ENCODE measurements at regions of chr17 and their contacts with region 1.

Region 1: GRCh38 chr17:43940630-43941029 is 1.6 kb downstream of the PPY start:
- DNase-seq: peak; percentile 81
- H3K4me3 ChIP-seq: no peak overlapping the region
- H3K27ac ChIP-seq: no peak overlapping the region
- H3K4me1 ChIP-seq: peaks cover 0 to 7% of the 10 kb centered on the region in 2 experiments; a peak in 1 of 4 replicates
- H3K27me3 ChIP-seq: no peaks in the 10 kb centered on the region
- CTCF ChIP-seq: peak; percentile 58
- EP300 ChIP-seq: no peak
- RAD21 ChIP-seq: peak; percentile 75

Region 2: DNA sequence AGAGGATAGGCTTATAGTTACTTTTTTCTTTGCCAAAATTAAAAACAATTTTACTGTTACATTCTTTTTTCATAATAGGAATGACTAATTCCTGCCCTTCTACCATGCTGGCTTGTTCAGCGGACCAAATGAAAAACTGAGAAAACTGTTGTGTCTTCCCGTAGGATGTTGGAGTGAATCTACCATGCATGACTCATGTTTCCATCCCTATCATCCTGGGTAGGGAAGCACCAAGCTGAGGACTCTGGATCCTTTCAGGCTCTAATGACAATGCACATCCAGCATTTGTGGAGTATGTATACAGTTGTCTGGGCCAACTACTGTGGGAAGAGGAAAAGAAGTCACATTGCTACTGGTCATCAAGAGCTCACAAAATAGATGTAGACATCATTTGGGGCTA is 497.9 kb before region 1 on chr17:
- CTCF ChIA-PET with region 1: no interaction called
- POLR2A ChIA-PET with region 1: no interaction called
- DNase-seq: no peak
- H3K4me3 ChIP-seq: no peak overlapping the region
- H3K27ac ChIP-seq: peak overlapping the region in 1 of 2 experiments; percentile 34; a peak in 1 of 4 replicates
- H3K4me1 ChIP-seq: no peaks in the 10 kb centered on the region
- H3K27me3 ChIP-seq: no peaks in the 10 kb centered on the region
- CTCF ChIP-seq: no peak
- EP300 ChIP-seq: no peak
- RAD21 ChIP-seq: no peak

Region 3: GRCh38 chr17:43832976-43833829 is 107.4 kb before region 1 on chr17 and contains the start of gene MPP3:
- CTCF ChIA-PET with region 1: no interaction called
- POLR2A ChIA-PET with region 1: no interaction called
- DNase-seq: peak; percentile 97
- H3K4me3 ChIP-seq: peak within 1 kb of the TSS; percentile 59 to 83
- H3K27ac ChIP-seq: peak within 1 kb of the TSS; percentile 38 to 62; a peak in 2 of 4 replicates
- H3K4me1 ChIP-seq: peaks cover 0 to 9% of the 10 kb centered on the region in 2 experiments; a peak in 1 of 4 replicates
- H3K27me3 ChIP-seq: no peaks in the 10 kb centered on the region
- CTCF ChIP-seq: no peak
- EP300 ChIP-seq: no peak
- RAD21 ChIP-seq: no peak
- polyA plus RNA-seq, gene MPP3: 12.5 and 14.1 TPM in 2 replicates

Region 4: GRCh38 chr17:43878260-43879175 is 62.1 kb before region 1 on chr17:
- CTCF ChIA-PET with region 1: interaction called, 99 read pairs
- POLR2A ChIA-PET with region 1: no interaction called
- DNase-seq: peak; percentile 91
- H3K4me3 ChIP-seq: no peak overlapping the region
- H3K27ac ChIP-seq: no peak overlapping the region
- H3K4me1 ChIP-seq: peaks cover 0 to 2% of the 10 kb centered on the region in 2 experiments; a peak in 1 of 4 replicates
- H3K27me3 ChIP-seq: no peaks in the 10 kb centered on the region
- CTCF ChIP-seq: peak; percentile 89
- EP300 ChIP-seq: no peak
- RAD21 ChIP-seq: peak; percentile 80

Region 5: DNA sequence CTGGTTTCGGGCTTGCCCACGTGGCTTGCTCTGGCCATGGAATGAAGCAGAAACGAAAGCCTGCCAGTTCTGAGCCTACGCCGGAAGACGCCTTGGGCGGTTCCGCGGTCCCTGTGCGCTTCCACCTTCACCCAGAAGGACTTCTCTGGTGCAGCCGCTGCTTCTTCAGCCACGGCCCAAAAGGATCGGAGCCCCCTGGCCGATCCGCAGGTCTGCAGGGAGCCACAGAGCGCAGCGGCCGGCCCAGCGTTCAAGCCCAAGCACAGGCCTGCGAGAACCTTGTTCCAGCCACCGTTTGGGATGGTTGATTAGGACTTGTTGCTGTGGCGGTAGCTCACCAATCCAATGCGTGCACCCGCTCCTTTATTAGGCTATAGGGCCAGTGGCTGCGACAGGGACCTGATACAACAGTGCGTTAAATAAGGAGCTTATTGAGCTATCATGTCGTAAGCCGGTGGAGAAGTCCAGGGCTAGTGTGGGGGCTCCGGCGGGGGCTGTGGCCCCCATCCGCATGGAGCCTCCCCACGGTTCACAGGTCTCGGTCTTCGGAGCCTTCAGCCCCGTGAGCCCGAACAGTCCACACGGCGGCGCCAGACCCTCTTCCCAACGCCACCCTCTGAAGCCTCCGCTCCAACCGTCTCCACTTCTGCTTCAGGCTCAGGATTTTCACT is 23.1 kb before region 1 on chr17:
- CTCF ChIA-PET with region 1: interaction called, 80 read pairs
- POLR2A ChIA-PET with region 1: no interaction called
- DNase-seq: no peak
- H3K4me3 ChIP-seq: no peak overlapping the region
- H3K27ac ChIP-seq: no peak overlapping the region
- H3K4me1 ChIP-seq: peaks cover 0 to 7% of the 10 kb centered on the region in 2 experiments; a peak in 1 of 4 replicates
- H3K27me3 ChIP-seq: no peaks in the 10 kb centered on the region; the same call in 1 of the 2 replicates
- CTCF ChIP-seq: no peak
- EP300 ChIP-seq: no peak
- RAD21 ChIP-seq: no peak

Region 6: GRCh38 chr17:43967251-43967875 is 26.7 kb after region 1 on chr17:
- CTCF ChIA-PET with region 1: interaction called, 12 read pairs
- POLR2A ChIA-PET with region 1: no interaction called
- DNase-seq: no peak
- H3K4me3 ChIP-seq: no peak overlapping the region
- H3K27ac ChIP-seq: no peak overlapping the region
- H3K4me1 ChIP-seq: no peaks in the 10 kb centered on the region
- H3K27me3 ChIP-seq: no peaks in the 10 kb centered on the region; the same call in 1 of the 2 replicates
- CTCF ChIP-seq: no peak
- EP300 ChIP-seq: no peak
- RAD21 ChIP-seq: no peak

Region 7: DNA sequence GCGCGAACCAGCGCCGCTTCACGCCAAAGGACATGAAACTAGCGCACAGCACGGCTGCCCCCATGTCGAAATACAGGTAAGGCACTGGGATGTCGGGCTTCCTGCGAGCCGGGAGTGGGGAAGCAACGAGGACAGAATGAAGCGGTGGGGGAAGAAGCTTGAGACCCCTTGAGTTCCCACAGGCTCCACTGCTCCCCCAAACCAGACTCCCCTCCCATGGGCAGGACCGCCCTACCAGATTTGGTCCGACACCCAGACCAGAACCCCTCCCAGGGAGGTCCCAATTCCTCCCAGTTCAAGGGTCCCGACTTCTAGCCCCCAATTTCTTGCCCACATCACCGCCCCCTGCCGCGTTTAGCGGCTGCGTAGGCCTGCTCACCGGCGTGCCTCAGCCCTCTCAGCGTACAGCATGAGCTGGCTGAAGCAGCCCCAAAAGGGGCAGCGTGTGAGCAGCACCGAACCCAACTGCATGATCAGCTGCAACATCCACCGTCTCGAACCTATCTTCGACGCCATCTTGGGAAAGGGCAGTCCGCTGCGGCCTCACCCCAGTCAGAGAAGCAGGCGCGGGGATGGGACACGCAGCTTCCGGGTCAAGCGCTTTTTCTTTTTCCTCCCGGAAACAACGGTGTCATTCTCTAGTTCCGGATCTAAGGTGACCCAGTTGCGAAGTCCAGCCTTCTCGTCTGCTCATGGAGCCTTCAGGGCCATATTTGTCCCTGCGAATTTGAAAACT is 74.0 kb after region 1 on chr17 and contains the start of gene TMEM101:
- CTCF ChIA-PET with region 1: interaction called, 638 read pairs
- POLR2A ChIA-PET with region 1: no interaction called
- DNase-seq: peak; percentile 93
- H3K4me3 ChIP-seq: peak within 1 kb of the TSS; percentile 96 to 97
- H3K27ac ChIP-seq: peak within 1 kb of the TSS; percentile 68 to 92
- H3K4me1 ChIP-seq: peaks cover 0 to 32% of the 10 kb centered on the region in 2 experiments; a peak in 2 of 4 replicates
- H3K27me3 ChIP-seq: no peaks in the 10 kb centered on the region
- CTCF ChIP-seq: no peak
- EP300 ChIP-seq: peak in 1 of 2 experiments; percentile 24; a peak in 1 of 4 replicates
- RAD21 ChIP-seq: no peak
- polyA plus RNA-seq, gene TMEM101: 62.9 and 63.6 TPM in 2 replicates

Measured in SK-N-SH (cell line).